Esophagus squamous epithelium (tissue), 5 donors: ENCODE measurements at regions of chr3 and their contacts with region 1.

Region 1: GRCh38 chr3:196251918-196252317 is 35.6 kb downstream of the SLC51A start:
- DNase-seq: no peak
- H3K4me3 ChIP-seq: no peak overlapping the region
- H3K27ac ChIP-seq: no peak overlapping the region
- H3K4me1 ChIP-seq: no peaks in the 10 kb centered on the region
- H3K27me3 ChIP-seq: no peaks in the 10 kb centered on the region
- CTCF ChIP-seq: no peak
- POLR2A ChIP-seq: no peak

Region 2: DNA sequence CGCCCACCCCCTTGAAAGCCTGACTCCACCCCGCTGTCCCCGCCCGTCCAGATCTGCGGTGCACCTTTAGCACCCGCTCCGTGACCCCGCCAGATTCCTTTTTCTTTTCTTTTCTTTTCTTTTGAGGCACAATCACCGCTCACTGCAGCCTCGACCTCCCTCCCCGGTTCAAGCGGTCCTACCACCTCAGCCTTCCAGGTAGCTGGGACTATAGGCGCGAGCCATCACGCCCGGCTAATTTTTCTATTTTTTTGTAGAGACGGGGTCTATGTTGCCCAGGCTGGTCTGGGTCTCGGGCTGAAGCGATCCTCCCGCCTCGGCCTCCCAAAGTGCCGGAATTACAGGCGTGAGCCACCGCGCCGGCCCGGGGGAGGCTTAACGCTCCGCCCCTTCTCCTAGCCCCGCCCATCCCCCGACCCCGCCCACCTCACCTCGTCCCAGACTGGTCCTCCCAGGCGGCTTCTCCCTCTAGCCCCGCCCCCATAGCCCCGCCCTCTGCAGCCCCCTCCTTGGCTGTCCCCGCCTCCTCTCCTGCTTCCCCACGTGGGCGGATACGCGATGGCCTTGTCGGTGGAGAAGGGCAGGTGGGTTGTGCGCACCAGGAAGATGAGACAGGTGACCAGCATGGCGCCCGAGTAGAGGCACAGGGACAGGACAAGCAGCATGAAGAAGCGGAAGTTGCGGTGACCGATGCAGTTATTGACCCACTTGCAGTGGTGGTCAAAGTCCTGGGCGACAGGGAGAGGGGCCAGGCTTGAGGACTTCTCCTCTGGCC is 43.9 kb before region 1 on chr3:
- intact Hi-C with region 1: no loop called
- DNase-seq: no peak
- H3K4me3 ChIP-seq: peak overlapping the region; percentile 25 to 58 (median 38)
- H3K27ac ChIP-seq: no peak overlapping the region
- H3K4me1 ChIP-seq: peaks cover 0 to 15% (median 3%) of the 10 kb centered on the region in 3 donors
- H3K27me3 ChIP-seq: peaks cover 0 to 13% (median 0%) of the 10 kb centered on the region in 4 donors
- CTCF ChIP-seq: no peak
- POLR2A ChIP-seq: no peak

Region 3: GRCh38 chr3:196518966-196519717 is 267.2 kb after region 1 on chr3:
- intact Hi-C with region 1: loop called (anchors 5 kb)
- DNase-seq: no peak
- H3K4me3 ChIP-seq: no peak overlapping the region
- H3K27ac ChIP-seq: no peak overlapping the region
- H3K4me1 ChIP-seq: peaks cover 0 to 13% (median 0%) of the 10 kb centered on the region in 3 donors
- H3K27me3 ChIP-seq: no peaks in the 10 kb centered on the region
- CTCF ChIP-seq: peak in 5 of 6 experiments; percentile 52 to 86 (median 71)
- POLR2A ChIP-seq: no peak